WTC11 (cell line): ENCODE measurements at regions of chr22 and their contacts with region 1.

Region 1: GRCh38 chr22:25110846-25111578 is 88.6 kb upstream of the CRYBB3 start:
- DNase-seq: peak; percentile 80
- ATAC-seq: peak; percentile 82
- H3K4me3 Mint-ChIP-seq: peak overlapping the region; percentile 73
- H3K27ac Mint-ChIP-seq: peak overlapping the region; percentile 91
- H3K4me1 Mint-ChIP-seq: peaks cover 33% of the 10 kb centered on the region
- H3K27me3 Mint-ChIP-seq: no peaks in the 10 kb centered on the region
- CTCF ChIP-seq: 0 out of 2 replicates have a peak, but pooled peaks have one; percentile 3

Region 2: DNA sequence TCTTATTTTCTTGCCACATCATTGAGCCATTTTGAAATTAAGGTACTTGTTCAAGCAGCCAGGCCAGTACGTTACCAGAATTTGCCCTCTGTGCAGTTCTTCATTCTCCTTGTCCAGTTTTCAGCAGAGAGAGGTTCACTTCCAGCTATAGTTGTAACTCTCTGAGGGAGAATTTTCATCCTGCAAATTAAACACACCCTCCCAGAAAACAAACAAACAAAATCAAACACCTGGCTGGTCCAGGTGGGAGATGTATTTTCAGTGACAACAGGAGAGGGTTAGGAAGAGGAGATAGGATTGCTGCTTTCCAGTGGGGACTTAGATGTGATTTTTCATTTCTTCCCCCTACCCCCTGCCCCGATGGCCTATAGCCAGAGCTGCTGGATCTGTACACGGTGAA is 209.6 kb before region 1 on chr22:
- CTCF ChIA-PET with region 1: no interaction called
- POLR2A ChIA-PET with region 1: no interaction called
- DNase-seq: no peak
- ATAC-seq: no peak
- H3K4me3 Mint-ChIP-seq: no peak overlapping the region
- H3K27ac Mint-ChIP-seq: no peak overlapping the region
- H3K4me1 Mint-ChIP-seq: peaks cover 14% of the 10 kb centered on the region
- H3K27me3 Mint-ChIP-seq: no peaks in the 10 kb centered on the region
- CTCF ChIP-seq: no peak

Region 3: DNA sequence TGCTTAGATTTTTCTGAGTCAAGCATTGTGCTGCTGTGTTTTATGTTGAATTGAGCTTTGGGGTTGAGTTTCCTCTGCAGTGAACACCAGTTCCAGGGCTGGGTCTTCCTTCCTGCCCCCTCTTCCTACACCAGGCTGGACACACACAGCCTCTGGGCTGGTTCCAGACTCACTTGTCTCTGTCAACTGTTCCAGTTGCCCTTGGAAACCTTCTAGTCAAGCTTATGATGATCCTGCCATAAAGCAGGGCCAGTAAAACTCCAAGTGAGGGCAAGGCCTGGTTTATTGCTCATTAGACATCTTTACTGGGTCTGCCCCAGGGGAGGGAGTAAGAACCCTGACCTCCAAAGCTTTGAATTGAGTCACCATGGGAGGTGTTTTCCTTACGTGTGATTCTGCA is 97.4 kb before region 1 on chr22:
- CTCF ChIA-PET with region 1: no interaction called
- POLR2A ChIA-PET with region 1: no interaction called
- DNase-seq: no peak
- ATAC-seq: no peak
- H3K4me3 Mint-ChIP-seq: no peak overlapping the region
- H3K27ac Mint-ChIP-seq: no peak overlapping the region
- H3K4me1 Mint-ChIP-seq: peaks cover 33% of the 10 kb centered on the region
- H3K27me3 Mint-ChIP-seq: no peaks in the 10 kb centered on the region
- CTCF ChIP-seq: no peak

Region 4: GRCh38 chr22:25081409-25081824 is 29.6 kb before region 1 on chr22:
- CTCF ChIA-PET with region 1: interaction called, 29 read pairs
- POLR2A ChIA-PET with region 1: no interaction called
- DNase-seq: peak; percentile 68
- ATAC-seq: peak; percentile 68
- H3K4me3 Mint-ChIP-seq: no peak overlapping the region
- H3K27ac Mint-ChIP-seq: no peak overlapping the region
- H3K4me1 Mint-ChIP-seq: no peaks in the 10 kb centered on the region
- H3K27me3 Mint-ChIP-seq: no peaks in the 10 kb centered on the region; the same call in 1 of the 2 replicates
- CTCF ChIP-seq: no peak; the same call in 1 of the 2 replicates

Region 5: DNA sequence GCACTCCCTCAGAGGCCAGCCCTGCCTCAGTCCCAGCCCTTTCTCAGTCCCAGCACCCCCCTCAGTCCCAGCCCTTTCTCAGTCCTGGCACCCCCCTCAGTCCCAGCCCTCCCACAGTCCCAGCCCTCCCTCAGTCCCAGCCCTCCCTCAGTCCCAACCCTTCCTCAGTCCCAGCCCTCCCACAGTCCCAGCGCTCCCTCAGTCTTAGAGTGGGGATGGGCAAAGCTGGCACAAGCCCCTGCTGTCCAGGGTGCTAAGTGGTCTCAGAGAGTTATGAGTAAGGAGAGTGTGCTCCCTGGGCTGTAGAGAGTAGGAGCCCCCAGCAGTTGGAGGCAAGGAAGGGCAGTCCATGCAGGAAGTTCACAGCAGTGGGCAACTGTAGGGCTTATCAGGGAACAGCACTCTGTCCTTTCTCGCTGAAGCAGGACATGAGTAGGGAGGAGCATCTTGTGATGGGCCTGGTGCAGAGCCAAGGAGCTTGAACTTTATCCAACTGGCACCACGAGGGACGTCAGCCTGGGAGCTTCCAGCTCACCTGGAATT is 37.2 kb after region 1 on chr22:
- CTCF ChIA-PET with region 1: interaction called, 22 read pairs
- POLR2A ChIA-PET with region 1: interaction called, 5 read pairs
- DNase-seq: no peak
- ATAC-seq: peak; percentile 73
- H3K4me3 Mint-ChIP-seq: no peak overlapping the region
- H3K27ac Mint-ChIP-seq: no peak overlapping the region
- H3K4me1 Mint-ChIP-seq: peaks cover 36% of the 10 kb centered on the region
- H3K27me3 Mint-ChIP-seq: no peaks in the 10 kb centered on the region
- CTCF ChIP-seq: no peak

Region 6: DNA sequence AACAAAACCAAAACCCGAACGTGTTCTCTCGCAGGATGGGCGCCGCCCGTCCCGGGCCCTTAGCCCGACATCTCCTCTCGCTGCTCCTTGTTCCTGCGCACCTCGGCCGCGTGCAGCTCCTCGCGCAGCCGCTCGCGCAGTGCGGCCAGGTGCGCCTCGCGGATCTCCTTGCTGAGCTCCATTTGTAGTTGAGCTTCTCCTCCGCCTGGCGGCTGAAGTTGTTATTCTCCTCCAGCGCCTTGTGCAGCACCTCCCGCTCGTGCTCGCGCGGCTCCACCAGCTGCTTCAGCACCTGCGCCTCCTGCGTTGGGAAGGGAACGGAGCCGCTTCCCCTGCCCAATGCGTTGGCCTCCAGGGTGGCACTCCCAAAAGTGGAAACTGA is 68.2 kb after region 1 on chr22:
- CTCF ChIA-PET with region 1: interaction called, 11 read pairs
- POLR2A ChIA-PET with region 1: no interaction called
- DNase-seq: peak; percentile 56
- ATAC-seq: peak; percentile 84
- H3K4me3 Mint-ChIP-seq: no peak overlapping the region
- H3K27ac Mint-ChIP-seq: no peak overlapping the region
- H3K4me1 Mint-ChIP-seq: peaks cover 7% of the 10 kb centered on the region
- H3K27me3 Mint-ChIP-seq: no peaks in the 10 kb centered on the region
- CTCF ChIP-seq: no peak

Region 7: DNA sequence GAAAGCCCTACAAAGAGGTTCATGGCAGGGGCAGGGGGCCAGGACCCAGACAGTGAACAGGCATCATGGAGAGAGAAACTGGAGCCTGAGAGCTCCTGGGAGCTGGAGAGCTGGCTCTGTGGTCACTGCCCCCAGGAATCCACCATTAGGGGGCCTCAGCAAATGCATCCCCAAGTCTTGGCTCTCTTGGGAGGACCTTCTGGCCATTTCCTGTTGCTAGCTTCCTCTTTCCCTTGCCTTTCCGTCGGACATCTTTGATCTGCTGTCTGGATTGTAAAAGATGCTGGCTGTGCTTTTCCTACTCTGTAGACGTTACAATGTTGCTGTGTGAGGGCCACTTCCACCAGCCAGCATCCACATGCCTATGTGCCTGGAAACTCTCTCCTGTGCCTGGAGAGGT is 101.3 kb after region 1 on chr22:
- CTCF ChIA-PET with region 1: interaction called, 14 read pairs
- POLR2A ChIA-PET with region 1: no interaction called
- DNase-seq: no peak
- ATAC-seq: no peak
- H3K4me3 Mint-ChIP-seq: no peak overlapping the region
- H3K27ac Mint-ChIP-seq: no peak overlapping the region
- H3K4me1 Mint-ChIP-seq: no peaks in the 10 kb centered on the region
- H3K27me3 Mint-ChIP-seq: peaks cover 13% of the 10 kb centered on the region
- CTCF ChIP-seq: no peak